ENCODE measurements at regions of chr7 and their contacts with region 1.

Region 1: DNA sequence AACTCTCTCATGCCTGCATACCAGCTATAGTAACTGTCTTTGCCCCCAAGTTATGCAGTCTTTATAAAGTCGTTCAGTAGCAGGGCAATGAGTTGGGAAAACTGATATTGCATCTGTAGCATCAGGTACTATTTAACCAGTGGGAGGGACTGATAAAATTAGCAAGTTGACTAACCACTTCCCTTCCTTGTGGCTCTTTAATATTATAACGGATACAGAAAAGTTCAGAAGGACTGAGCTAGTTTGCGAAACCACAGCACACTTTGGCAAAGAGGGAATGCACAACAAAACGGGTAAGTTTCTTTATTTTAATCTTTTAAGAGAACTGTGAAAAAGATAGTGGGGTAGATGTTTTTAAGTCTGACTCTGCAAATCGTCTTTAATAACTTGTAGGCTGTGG is 205.3 kb upstream of the HDAC9 start:
- DNase-seq: no peak
- ATAC-seq: peak; percentile 43

Region 2: GRCh38 chr7:18239212-18239611 is 51.0 kb before region 1 on chr7:
- intact Hi-C with region 1: loop called (anchors 10 kb)
- DNase-seq: no peak
- ATAC-seq: no peak

Region 3: GRCh38 chr7:18927134-18927533 is 636.9 kb after region 1 on chr7:
- intact Hi-C with region 1: no loop called
- DNase-seq: no peak
- ATAC-seq: no peak